GM13976 (cell line): ENCODE measurements at regions of chr15 and their contacts with region 1.

Region 1: GRCh38 chr15:90886041-90886614 is 1.8 kb downstream of the FES start:
- DNase-seq: peak; percentile 84
- CTCF ChIP-seq: peak; percentile 94

Region 2: DNA sequence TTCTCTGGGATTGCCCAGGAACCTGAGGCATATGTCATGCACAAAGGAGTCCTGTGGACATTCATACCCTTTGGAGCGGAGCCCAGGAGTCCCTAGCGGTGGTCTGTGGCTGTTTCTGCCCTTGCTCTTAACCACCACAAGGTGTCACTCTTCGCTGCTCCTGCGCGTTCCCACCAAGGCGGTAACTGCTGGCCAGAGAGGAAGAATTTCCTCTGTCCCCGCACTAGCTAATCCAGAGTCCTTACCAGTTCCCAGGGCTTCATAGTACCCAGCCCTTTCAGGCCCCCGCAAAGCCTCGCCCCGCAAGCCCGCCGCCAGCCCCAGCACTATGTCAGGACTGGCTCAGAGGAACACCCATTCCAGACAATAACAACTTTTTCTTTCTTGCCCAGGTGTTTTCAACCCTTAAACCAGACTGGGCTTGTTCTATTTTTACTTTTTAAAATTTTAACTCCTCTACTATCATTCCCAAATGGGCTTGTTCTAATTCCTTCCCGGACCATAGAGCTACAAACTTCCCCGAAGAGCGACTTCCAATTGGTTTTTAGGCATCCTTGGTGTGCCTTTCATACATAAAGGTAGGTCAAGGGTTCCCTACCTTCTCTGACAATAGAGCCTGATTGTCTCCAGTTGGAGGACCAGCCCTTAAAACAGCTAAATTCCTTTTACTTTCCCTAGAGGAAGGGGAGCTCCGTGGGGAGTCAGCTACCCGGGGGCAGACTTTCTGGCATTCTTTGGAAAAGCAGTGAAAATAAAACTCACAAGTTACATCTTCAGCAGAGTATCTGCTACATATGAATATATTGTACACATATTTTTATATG is 565.9 kb before region 1 on chr15:
- in situ Hi-C with region 1: loop called (anchors 25 kb)
- DNase-seq: peak; percentile 88
- CTCF ChIP-seq: peak; percentile 97

Region 3: GRCh38 chr15:90482124-90483011 is 403.8 kb before region 1 on chr15:
- in situ Hi-C with region 1: loop called (anchors 25 kb)
- DNase-seq: peak; percentile 45
- CTCF ChIP-seq: peak; percentile 60

Region 4: GRCh38 chr15:90648137-90649070 is 237.7 kb before region 1 on chr15:
- in situ Hi-C with region 1: loop called (anchors 5 kb)
- DNase-seq: peak; percentile 78
- CTCF ChIP-seq: peak; percentile 65

Region 5: GRCh38 chr15:90691982-90692773 is 193.9 kb before region 1 on chr15:
- in situ Hi-C with region 1: loop called (anchors 10 kb)
- DNase-seq: peak; percentile 58
- CTCF ChIP-seq: no peak

Region 6: GRCh38 chr15:90769375-90769774 is 116.8 kb before region 1 on chr15:
- in situ Hi-C with region 1: no loop called
- DNase-seq: no peak
- CTCF ChIP-seq: no peak

Region 7: DNA sequence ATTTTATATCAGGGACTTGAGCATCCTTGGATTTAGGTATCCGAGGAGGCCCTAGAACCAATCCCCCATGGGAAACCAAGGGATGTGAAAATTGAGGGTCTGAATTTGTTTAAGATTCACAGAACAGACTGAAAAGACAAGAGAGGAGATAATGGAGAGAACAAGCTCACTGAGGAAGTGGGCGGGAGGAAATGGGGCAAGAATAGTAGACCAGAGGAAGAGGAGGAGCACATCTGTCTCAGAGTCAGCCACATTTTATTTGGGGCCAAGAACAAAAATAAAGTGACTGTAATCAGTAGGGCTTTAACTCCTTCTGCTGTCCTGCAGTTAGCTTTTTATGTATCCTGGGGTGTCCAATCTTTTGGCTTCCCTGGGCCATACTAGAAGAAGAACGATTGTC is 105.2 kb before region 1 on chr15:
- in situ Hi-C with region 1: no loop called
- DNase-seq: peak; percentile 26
- CTCF ChIP-seq: no peak